Naive thymus-derived CD4-positive, alpha-beta T cell (primary cell): ENCODE measurements at regions of chrX and their contacts with region 1.

Region 1: GRCh38 chrX:64894454-64895038 is 81.7 kb downstream of the ZC4H2 start:
- DNase-seq: peak in 6 of 9 donors; percentile 14 to 29 (median 23)
- ATAC-seq: no peak
- H3K4me3 ChIP-seq: no peak overlapping the region
- H3K4me3 Mint-ChIP-seq: no peak overlapping the region
- H3K27ac ChIP-seq: no peak overlapping the region
- H3K27ac Mint-ChIP-seq: peak overlapping the region in 2 of 9 donors; percentile 8 to 73
- H3K4me1 ChIP-seq: no peaks in the 10 kb centered on the region
- H3K4me1 Mint-ChIP-seq: peaks cover 0 to 31% (median 7%) of the 10 kb centered on the region in 7 donors
- H3K27me3 ChIP-seq: no peaks in the 10 kb centered on the region
- H3K27me3 Mint-ChIP-seq: no peaks in the 10 kb centered on the region

Region 2: DNA sequence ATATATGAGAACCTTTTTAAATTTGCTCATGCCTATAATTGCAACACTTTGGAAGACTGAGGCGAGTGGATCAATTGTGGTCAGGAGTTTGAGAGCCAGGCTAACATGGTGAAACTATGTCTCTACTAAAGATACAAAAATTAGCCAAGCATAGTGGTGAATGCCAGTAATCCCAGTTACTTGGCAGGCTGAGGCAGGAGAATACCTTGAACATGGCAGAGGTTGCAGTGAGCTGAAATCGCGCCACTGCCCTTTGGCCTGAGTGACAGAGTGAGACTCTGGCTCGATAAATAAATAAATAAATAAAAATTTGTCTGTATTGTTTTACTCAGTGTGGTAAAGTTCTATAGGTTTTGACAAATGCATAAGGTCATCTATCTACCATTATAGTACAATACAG is 136.5 kb before region 1 on chrX:
- CTCF ChIA-PET with region 1: no interaction called
- POLR2A ChIA-PET with region 1: no interaction called
- intact Hi-C with region 1: loop called in 1 of 2 experiments (anchors 1 kb)
- DNase-seq: no peak
- ATAC-seq: no peak
- H3K4me3 ChIP-seq: no peak overlapping the region
- H3K4me3 Mint-ChIP-seq: no peak overlapping the region
- H3K27ac ChIP-seq: no peak overlapping the region
- H3K27ac Mint-ChIP-seq: no peak overlapping the region
- H3K4me1 ChIP-seq: peaks cover 3 to 5% of the 10 kb centered on the region in 2 donors
- H3K4me1 Mint-ChIP-seq: peaks cover 0 to 27% (median 14%) of the 10 kb centered on the region in 7 donors
- H3K27me3 ChIP-seq: no peaks in the 10 kb centered on the region
- H3K27me3 Mint-ChIP-seq: no peaks in the 10 kb centered on the region

Region 3: GRCh38 chrX:65196758-65197360 is 302.3 kb after region 1 on chrX:
- CTCF ChIA-PET with region 1: no interaction called
- POLR2A ChIA-PET with region 1: no interaction called
- intact Hi-C with region 1: no loop called
- DNase-seq: peak in 3 of 9 donors; percentile 1 to 3 (median 2)
- ATAC-seq: no peak
- H3K4me3 ChIP-seq: no peak overlapping the region
- H3K4me3 Mint-ChIP-seq: peak overlapping the region in 9 of 10 donors; percentile 23 to 66 (median 59)
- H3K27ac ChIP-seq: no peak overlapping the region
- H3K27ac Mint-ChIP-seq: peak overlapping the region in 2 of 9 donors; percentile 42 to 54
- H3K4me1 ChIP-seq: no peaks in the 10 kb centered on the region
- H3K4me1 Mint-ChIP-seq: peaks cover 0 to 13% (median 5%) of the 10 kb centered on the region in 7 donors
- H3K27me3 ChIP-seq: no peaks in the 10 kb centered on the region
- H3K27me3 Mint-ChIP-seq: no peaks in the 10 kb centered on the region